ENCODE measurements at regions of chr2 and their contacts with region 1.

Region 1: DNA sequence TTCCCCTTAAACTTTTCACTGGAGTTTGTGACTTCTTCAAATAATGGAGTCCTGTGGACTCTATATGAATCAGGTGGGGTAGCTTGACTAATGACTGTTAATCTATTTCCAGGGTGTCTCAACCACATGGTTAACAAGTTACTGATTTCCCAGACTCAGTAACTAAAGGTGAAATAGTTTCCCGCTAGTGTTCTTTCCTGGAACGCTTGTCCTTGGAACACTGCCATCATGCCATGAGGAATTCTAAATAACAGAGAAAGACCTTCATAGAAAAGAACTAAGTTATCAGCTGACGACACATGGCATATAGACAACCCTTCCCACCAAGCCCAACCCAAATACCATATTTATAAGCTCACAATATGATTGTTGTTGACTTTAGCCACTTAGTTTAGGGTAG is 1027.9 kb upstream of the FAM98A start:
- DNase-seq: peak; percentile 75
- H3K4me3 Mint-ChIP-seq: no peak overlapping the region
- H3K27ac Mint-ChIP-seq: peak overlapping the region; percentile 82
- H3K4me1 Mint-ChIP-seq: no peaks in the 10 kb centered on the region
- H3K27me3 Mint-ChIP-seq: no peaks in the 10 kb centered on the region
- CTCF ChIP-seq: no peak

Region 2: DNA sequence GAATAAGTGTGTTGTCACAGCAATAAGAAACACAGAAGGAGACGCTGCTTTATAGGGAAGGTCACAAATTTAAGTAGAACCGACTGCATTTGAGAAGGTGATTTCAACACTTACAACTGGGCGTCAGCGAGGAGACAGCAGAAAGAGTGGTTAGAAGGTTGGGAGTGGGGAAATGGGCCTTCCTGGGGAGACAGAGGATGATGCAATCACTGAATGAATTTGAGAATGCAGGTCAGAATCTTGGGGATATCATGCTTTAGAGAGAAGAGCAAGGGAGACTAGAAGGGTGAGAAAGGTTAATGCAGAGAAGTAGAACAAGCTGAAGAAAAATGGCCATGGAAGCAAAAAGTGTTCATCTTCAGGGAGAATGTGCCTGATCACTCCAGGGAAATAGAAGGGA is 411.8 kb before region 1 on chr2:
- CTCF ChIA-PET with region 1: no interaction called
- intact Hi-C with region 1: no loop called
- DNase-seq: no peak
- H3K4me3 Mint-ChIP-seq: no peak overlapping the region
- H3K27ac Mint-ChIP-seq: no peak overlapping the region
- H3K4me1 Mint-ChIP-seq: no peaks in the 10 kb centered on the region
- H3K27me3 Mint-ChIP-seq: no peaks in the 10 kb centered on the region
- CTCF ChIP-seq: no peak

Region 3: DNA sequence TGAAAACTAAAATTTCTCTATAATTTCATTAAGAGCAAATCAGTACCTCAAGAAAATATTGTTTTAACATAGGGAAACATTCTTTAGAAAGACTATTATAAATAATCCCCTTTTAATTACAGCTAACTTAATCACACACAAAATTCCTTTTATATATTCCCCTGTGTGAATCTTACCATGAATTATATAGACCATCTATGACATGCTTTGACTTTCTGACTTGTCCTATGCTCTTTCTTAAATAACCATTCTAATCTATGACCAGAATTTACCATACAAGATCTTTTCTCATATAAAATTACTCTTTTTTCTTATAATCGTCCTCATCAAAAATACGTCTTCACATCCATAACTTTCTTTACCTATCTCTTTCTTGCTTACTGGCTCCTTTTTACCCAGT is 203.7 kb before region 1 on chr2:
- CTCF ChIA-PET with region 1: no interaction called
- intact Hi-C with region 1: no loop called
- DNase-seq: no peak
- H3K4me3 Mint-ChIP-seq: no peak overlapping the region
- H3K27ac Mint-ChIP-seq: no peak overlapping the region
- H3K4me1 Mint-ChIP-seq: peaks cover 8% of the 10 kb centered on the region
- H3K27me3 Mint-ChIP-seq: no peaks in the 10 kb centered on the region
- CTCF ChIP-seq: no peak

Region 4: GRCh38 chr2:34705556-34706247 is 78.7 kb after region 1 on chr2:
- CTCF ChIA-PET with region 1: no interaction called
- intact Hi-C with region 1: loop called (anchors 1 kb)
- DNase-seq: no peak
- H3K4me3 Mint-ChIP-seq: no peak overlapping the region
- H3K27ac Mint-ChIP-seq: peak overlapping the region; percentile 64
- H3K4me1 Mint-ChIP-seq: peaks cover 8% of the 10 kb centered on the region
- H3K27me3 Mint-ChIP-seq: no peaks in the 10 kb centered on the region
- CTCF ChIP-seq: no peak

Region 5: GRCh38 chr2:34738691-34739090 is 111.7 kb after region 1 on chr2:
- CTCF ChIA-PET with region 1: no interaction called
- intact Hi-C with region 1: loop called (anchors 10 kb)
- DNase-seq: peak; percentile 6
- H3K4me3 Mint-ChIP-seq: no peak overlapping the region
- H3K27ac Mint-ChIP-seq: no peak overlapping the region
- H3K4me1 Mint-ChIP-seq: peaks cover 9% of the 10 kb centered on the region
- H3K27me3 Mint-ChIP-seq: no peaks in the 10 kb centered on the region
- CTCF ChIP-seq: no peak

Region 6: DNA sequence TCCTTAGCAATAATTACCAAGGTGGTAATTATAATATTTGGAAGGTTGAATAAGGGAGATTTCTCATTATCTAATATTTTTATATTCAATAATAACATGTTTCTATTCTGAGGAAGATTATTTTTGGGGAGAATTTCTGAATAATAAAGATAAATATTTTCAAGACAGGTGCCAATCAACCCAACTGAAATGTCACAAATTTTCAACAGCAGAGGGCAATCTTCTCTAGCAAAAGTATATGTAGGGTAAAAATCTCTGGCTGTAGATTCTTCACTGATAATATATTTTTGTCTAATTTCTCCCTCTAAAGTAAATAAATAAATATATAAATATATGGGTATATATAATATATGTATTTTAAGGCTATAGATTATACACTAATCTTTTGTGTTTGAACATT is 541.4 kb after region 1 on chr2:
- CTCF ChIA-PET with region 1: no interaction called
- intact Hi-C with region 1: no loop called
- DNase-seq: no peak
- H3K4me3 Mint-ChIP-seq: no peak overlapping the region
- H3K27ac Mint-ChIP-seq: no peak overlapping the region
- H3K4me1 Mint-ChIP-seq: no peaks in the 10 kb centered on the region
- H3K27me3 Mint-ChIP-seq: no peaks in the 10 kb centered on the region
- CTCF ChIP-seq: no peak

Measured in Calu3 (cell line).